PC-9 (cell line): ENCODE measurements at regions of chr1 and their contacts with region 1.

Region 1: DNA sequence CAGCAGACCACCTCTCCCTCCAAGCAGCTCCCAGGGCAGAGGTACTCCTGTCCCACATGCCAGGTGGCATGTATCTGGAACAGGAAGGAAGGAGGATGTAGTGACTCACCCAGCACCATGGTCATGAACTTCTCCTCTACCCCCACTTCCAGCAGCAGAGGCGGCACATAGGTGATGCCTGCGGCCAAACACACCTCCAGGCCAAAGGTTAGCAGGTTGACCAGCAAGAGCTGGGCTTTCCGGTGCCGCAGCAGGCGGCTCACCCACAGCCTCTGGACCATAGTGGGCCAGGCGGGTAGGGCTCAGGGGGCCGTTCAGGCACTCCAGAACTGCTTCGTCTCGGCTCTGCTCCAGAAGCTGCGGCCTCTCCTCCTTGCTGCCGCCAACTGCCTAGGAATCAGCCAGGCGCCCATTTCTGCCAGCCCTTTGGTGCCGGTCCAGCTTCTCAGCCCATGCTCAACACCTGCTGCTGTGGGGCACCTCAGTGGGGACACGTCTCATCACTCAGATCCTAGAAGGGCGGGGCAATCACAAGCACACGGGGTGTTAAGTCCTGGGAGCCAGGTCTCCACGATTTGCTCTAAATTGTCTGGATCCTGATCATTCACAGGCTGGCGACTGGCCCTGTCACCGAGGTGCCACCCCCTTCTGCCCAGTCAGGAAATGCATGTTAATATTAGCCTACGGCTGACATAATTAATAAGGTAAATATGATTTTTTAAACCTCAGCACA is 15.8 kb downstream of the SLC45A3 start:
- DNase-seq: peak; percentile 81 to 95
- H3K4me3 ChIP-seq: peak overlapping the region; percentile 47; the same call in 1 of the 2 replicates
- H3K27ac ChIP-seq: peak overlapping the region; percentile 90
- H3K4me1 ChIP-seq: peaks cover 81% of the 10 kb centered on the region
- H3K27me3 ChIP-seq: no peaks in the 10 kb centered on the region
- CTCF ChIP-seq: no peak

Region 2: GRCh38 chr1:205680073-205680851 is 15.7 kb after region 1 on chr1 and contains the start of gene SLC45A3:
- CTCF ChIA-PET with region 1: interaction called, 3 read pairs
- POLR2A ChIA-PET with region 1: no interaction called
- intact Hi-C with region 1: loop called (anchors 1 kb)
- DNase-seq: peak; percentile 46 to 55
- H3K4me3 ChIP-seq: peak within 1 kb of the TSS; percentile 63
- H3K27ac ChIP-seq: peak within 1 kb of the TSS; percentile 51
- H3K4me1 ChIP-seq: peaks cover 37% of the 10 kb centered on the region
- H3K27me3 ChIP-seq: no peaks in the 10 kb centered on the region
- CTCF ChIP-seq: no peak
- total RNA-seq, gene SLC45A3: 15.2 and 19.9 TPM in 2 replicates